Ovary (tissue), 10 donors: ENCODE measurements at regions of chr5 and their contacts with region 1.

Region 1: GRCh38 chr5:132963175-132964104 is at the start of gene AFF4:
- DNase-seq: peak; percentile 96 to 97 (median 97)
- H3K4me3 ChIP-seq: peak within 1 kb of the TSS; percentile 72
- H3K27ac ChIP-seq: peak within 1 kb of the TSS; percentile 96 to 97
- H3K4me1 ChIP-seq: peaks cover 7% of the 10 kb centered on the region
- H3K27me3 ChIP-seq: no peaks in the 10 kb centered on the region
- CTCF ChIP-seq: peak in 1 of 3 donors; percentile 37
- EP300 ChIP-seq: no peak
- POLR2A ChIP-seq: peak; percentile 99
- total RNA-seq, gene AFF4: 56.6 to 114 (median 83.3) TPM

Region 2: GRCh38 chr5:132866342-132867045 is 96.9 kb before region 1 on chr5 and contains the starts of genes GDF9 and UQCRQ:
- intact Hi-C with region 1: loop called in 1 of 4 experiments (anchors 2 kb)
- DNase-seq: peak; percentile 94 to 96 (median 94)
- H3K4me3 ChIP-seq: peak within 1 kb of the TSS; percentile 91
- H3K27ac ChIP-seq: peak within 1 kb of the TSS; percentile 86 to 90
- H3K4me1 ChIP-seq: no peaks in the 10 kb centered on the region
- H3K27me3 ChIP-seq: no peaks in the 10 kb centered on the region
- CTCF ChIP-seq: no peak
- EP300 ChIP-seq: peak; percentile 58
- POLR2A ChIP-seq: peak; percentile 89
- total RNA-seq, gene GDF9: 0.20 to 0.31 (median 0.27) TPM in 5 of 7 donors, not detected in the others
- total RNA-seq, gene UQCRQ: 91.4 to 231 (median 222) TPM

Region 3: DNA sequence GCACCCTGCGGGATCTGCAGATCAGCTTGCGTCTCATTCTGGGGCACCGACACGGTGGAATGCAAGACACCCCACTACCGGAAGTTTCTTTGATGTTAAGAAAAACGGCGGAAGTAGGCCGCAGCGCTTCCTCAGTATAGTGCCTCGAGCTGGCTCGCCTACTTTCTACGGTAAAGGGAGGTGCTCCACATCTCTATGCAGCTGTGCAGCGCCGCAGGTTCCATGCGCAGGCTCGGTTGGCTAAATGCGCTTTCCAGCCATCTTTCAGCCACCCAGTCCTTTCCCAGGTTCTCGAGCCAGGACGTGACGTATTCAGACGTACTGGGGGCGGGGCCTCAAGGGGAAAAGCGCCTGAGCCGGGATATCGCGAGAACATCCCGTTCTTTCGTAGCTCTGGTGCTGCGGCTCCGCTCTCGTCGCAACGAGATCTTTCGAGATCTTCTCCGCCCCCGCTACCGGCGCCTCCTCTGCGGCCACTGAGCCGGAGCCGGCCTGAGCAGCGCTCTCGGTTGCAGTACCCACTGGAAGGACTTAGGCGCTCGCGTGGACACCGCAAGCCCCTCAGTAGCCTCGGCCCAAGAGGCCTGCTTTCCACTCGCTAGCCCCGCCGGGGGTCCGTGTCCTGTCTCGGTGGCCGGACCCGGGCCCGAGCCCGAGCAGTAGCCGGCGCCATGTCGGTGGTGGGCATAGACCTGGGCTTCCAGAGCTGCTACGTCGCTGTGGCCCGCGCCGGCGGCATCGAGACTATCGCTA is 88.3 kb after region 1 on chr5 and contains the start of gene HSPA4:
- intact Hi-C with region 1: loop called in 1 of 4 experiments (anchors 5 kb)
- DNase-seq: peak; percentile 97 to 99 (median 98)
- H3K4me3 ChIP-seq: peak within 1 kb of the TSS; percentile 93
- H3K27ac ChIP-seq: peak within 1 kb of the TSS; percentile 93 to 98
- H3K4me1 ChIP-seq: peaks cover 4% of the 10 kb centered on the region
- H3K27me3 ChIP-seq: no peaks in the 10 kb centered on the region
- CTCF ChIP-seq: peak in 1 of 3 donors; percentile 29
- EP300 ChIP-seq: peak; percentile 63
- POLR2A ChIP-seq: peak; percentile 94
- total RNA-seq, gene HSPA4: 25.0 to 82.3 (median 61.1) TPM

Region 4: DNA sequence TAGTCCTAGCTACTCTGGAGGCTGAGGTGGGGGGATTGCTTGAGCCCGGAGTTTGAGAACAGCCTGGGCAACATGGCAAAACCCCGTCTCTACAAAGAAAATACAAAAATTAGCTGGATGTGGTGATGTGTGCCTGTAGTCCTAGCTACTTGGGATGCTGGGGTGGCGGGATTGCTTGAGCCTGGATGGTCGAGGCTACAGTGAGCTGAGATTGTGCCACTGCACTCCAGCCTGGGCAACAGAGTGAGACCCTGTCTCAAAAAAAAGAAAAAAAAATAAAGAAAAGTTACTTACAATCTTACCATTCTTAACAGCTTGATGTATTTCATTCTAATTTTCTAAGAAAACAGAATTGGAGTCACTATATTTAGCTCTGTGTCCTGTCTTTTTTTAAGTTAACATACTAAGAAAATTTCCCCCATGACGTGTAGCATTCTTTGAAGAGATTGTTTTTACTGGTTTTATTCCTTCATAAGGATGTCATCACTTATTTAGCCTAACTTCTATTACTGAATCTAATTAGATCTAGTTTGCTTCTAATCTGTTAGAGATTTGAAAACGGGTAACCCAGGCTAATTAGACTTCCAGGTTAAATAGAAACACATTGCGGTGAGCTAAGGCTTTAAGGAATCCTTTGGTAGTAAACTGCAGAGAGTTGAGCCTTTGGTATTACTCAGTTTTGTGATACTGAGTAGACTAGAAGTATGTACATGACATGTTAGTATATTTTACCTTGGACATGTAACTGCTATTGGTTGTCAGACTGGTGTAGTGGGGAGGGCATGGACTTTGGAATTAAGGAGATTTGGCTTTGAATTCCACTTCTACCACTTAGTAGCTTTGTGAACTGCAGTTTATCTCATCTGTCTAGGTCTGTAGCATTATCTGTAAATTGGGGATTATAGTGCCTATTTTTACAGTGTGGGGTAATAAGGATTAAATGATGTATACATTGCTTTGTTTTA is 112.4 kb after region 1 on chr5:
- intact Hi-C with region 1: no loop called
- DNase-seq: no peak
- H3K4me3 ChIP-seq: no peak overlapping the region
- H3K27ac ChIP-seq: no peak overlapping the region
- H3K4me1 ChIP-seq: no peaks in the 10 kb centered on the region
- H3K27me3 ChIP-seq: no peaks in the 10 kb centered on the region
- CTCF ChIP-seq: no peak
- EP300 ChIP-seq: no peak
- POLR2A ChIP-seq: no peak